ENCODE measurements at regions of chr18 and their contacts with region 1.

Region 1: GRCh38 chr18:44679056-44679905 is 1.4 kb upstream of the SETBP1 start:
- DNase-seq: peak; percentile 93
- H3K4me3 Mint-ChIP-seq: no peak overlapping the region
- H3K27ac Mint-ChIP-seq: peak overlapping the region; percentile 60
- H3K4me1 Mint-ChIP-seq: peaks cover 6% of the 10 kb centered on the region
- H3K27me3 Mint-ChIP-seq: peaks cover 31% of the 10 kb centered on the region

Region 2: GRCh38 chr18:44699572-44700261 is 20.4 kb after region 1 on chr18:
- intact Hi-C with region 1: loop called (anchors 2 kb)
- DNase-seq: no peak
- H3K4me3 Mint-ChIP-seq: no peak overlapping the region
- H3K27ac Mint-ChIP-seq: no peak overlapping the region
- H3K4me1 Mint-ChIP-seq: peaks cover 15% of the 10 kb centered on the region
- H3K27me3 Mint-ChIP-seq: peaks cover 33% of the 10 kb centered on the region

Region 3: DNA sequence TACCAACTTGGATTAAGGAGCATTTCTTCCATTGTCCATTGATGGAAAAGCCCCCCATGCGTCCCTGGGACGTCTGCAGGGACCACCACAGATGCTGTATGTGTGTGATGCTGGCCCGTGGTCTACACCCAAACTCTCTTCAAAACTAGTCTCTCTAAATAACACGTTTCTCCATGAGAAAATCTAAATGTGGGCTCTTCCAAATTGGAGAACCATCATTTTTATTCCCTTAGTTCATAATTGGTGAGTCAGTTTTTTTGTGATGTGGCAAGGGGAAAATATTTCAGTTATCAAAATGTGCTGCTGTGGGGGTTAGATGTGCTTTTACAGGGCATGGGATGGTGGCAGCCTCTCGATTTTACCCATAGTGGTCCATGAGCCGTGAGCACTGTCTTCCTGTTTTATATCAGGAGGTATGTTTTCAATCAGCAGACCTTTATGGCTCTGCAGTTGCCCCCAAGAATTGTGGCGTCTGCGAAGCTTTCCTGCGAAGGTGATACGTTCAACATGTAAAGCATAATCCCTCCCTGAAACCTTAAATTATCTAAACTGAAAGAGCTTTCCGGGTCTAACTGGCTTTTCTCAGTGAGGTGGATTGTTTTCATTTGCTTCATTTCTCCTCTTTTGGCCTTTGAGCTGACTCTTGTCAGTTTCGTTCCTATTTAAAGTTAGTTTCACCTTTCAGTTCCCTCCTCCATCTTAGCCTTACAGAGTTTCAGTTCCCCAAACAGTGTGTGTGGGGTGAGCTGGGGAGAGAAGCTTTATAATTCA is 79.8 kb after region 1 on chr18:
- intact Hi-C with region 1: loop called (anchors 1 kb)
- DNase-seq: peak; percentile 78
- H3K4me3 Mint-ChIP-seq: peak overlapping the region; percentile 77
- H3K27ac Mint-ChIP-seq: peak overlapping the region; percentile 97
- H3K4me1 Mint-ChIP-seq: peaks cover 32% of the 10 kb centered on the region
- H3K27me3 Mint-ChIP-seq: peaks cover 11% of the 10 kb centered on the region

Region 4: GRCh38 chr18:44887227-44887631 is 207.9 kb after region 1 on chr18:
- intact Hi-C with region 1: loop called (anchors 1 kb)
- DNase-seq: peak; percentile 73
- H3K4me3 Mint-ChIP-seq: peak overlapping the region; percentile 59
- H3K27ac Mint-ChIP-seq: peak overlapping the region; percentile 93
- H3K4me1 Mint-ChIP-seq: peaks cover 27% of the 10 kb centered on the region
- H3K27me3 Mint-ChIP-seq: peaks cover 2% of the 10 kb centered on the region

Region 5: DNA sequence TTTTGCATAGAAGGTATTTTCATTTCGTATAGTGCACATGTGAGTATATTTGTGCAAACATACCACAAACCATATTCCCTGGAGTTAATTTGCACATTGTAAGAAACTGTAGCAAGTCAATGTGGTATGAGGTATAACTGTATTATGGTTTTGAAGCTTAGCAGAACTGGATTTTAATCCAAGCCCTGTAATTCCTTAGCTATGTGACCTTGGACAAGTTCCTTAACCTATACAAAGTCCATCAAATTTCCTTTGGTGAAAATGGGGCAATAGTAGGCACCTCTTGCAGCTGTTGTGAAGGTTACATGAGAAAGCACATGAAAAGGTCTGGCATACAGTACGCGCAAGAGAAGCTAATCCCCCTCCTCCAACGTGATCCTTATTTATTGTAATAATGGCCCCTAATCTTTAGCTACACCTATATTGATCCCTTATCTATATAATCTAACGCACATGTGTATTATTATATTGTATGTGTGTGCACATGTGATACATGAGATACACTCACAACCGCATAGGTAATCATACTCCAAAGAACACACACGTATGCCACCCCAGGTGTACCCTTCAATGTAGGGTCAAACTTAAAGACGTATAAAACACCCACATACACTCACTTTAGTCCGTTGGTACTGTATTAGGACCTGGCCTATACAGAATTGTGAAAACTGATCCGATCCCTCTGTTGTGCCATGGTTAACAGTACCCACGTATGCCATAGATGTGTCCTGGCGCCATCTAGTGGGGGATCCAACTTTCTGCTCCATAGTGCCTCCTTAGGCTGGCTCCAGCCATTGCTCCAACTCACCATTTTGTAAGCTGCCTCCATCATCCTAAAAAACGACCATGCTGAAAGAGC is 533.1 kb after region 1 on chr18:
- intact Hi-C with region 1: loop called (anchors 1 kb)
- DNase-seq: peak; percentile 92
- H3K4me3 Mint-ChIP-seq: no peak overlapping the region
- H3K27ac Mint-ChIP-seq: no peak overlapping the region
- H3K4me1 Mint-ChIP-seq: no peaks in the 10 kb centered on the region
- H3K27me3 Mint-ChIP-seq: no peaks in the 10 kb centered on the region

Measured in activated CD4-positive, alpha-beta T cell treated with anti-CD3 and anti-CD28 coated beads, Interleukin-2, amount 10 ng/mL, durations not matched to agents 24 days and 14 days (primary cell).